ENCODE measurements at regions of chr10 and their contacts with region 1.

Region 1: DNA sequence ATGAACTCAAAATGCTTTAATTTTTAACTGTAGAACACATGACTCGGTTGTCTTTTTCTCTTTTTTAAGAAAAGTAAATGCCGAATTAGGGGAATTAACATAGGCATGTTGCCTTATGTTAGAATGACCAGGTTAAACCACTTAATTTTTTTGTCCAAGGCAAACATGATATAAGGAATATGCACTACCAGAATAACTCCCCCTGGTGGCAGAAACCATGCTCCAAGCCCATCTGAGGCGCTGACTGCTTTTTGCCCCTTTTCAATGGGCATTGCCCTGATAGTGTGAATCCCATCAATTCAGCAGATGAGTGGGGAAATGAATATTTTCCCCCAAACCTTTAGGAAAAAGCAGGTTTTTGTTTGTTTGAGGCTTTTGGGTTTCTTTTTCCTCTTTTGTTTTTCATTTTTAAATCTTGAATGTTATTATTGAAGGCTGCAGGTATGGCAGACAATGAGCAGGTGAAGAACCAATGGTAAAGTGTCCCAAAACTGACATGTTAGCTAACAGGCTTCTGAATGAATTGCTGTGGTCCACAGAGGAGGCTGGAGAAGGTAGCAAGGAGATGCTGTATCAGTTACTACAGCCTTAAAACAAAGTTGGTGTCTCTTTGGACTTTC is 284.3 kb downstream of the SORCS3 start:
- DNase-seq: peak; percentile 24
- ATAC-seq: no peak

Region 2: GRCh38 chr10:104417637-104418296 is 507.6 kb before region 1 on chr10:
- intact Hi-C with region 1: loop called in 1 of 2 experiments (anchors 10 kb)
- DNase-seq: no peak
- ATAC-seq: no peak

Region 3: GRCh38 chr10:104642658-104643302 is 282.6 kb before region 1 on chr10:
- intact Hi-C with region 1: loop called in 1 of 2 experiments (anchors 10 kb)
- DNase-seq: peak; percentile 29
- ATAC-seq: peak in 1 of 2 donors; percentile 56

Region 4: DNA sequence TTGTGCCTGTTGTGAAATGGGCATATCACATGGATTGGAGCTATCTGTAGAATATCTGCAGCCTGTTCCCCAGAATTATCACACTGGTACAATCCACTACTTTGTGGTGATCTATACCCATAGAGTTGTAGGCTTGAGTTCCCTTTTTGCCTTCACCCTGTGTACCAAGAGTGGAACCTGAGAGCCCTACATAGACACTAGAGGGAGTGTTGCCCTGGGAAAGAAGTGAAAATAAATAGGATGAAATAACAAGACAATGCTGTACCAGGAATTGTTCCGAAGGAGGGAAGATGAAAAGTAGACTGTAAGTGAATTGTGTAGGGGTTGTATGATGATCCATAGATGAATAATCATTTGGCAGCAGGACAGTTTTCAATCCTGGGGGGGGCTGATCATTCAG is 275.3 kb before region 1 on chr10:
- intact Hi-C with region 1: loop called (anchors 2 to 10 kb)
- DNase-seq: no peak
- ATAC-seq: peak in 1 of 2 donors; percentile 53

Region 5: DNA sequence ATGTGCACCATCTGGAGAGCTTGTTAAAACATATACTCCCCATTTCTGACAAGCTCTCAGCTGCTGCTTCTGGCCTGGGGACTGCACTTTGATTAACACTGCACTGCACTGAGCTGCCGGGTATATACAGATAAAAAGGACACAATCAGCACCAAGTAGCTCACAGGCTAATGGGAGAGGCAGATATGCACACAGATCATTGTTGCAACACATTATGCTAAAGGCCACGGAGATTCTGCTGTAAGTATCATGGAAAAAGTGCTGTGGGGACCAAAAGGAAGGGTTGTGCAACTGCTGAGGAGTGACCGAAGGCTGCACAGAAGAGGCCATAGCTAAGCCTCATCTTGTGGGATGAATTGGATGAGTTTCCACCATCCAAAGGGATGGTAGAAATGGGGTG is 171.0 kb after region 1 on chr10:
- intact Hi-C with region 1: no loop called
- DNase-seq: no peak
- ATAC-seq: no peak

Region 6: GRCh38 chr10:106038246-106038645 is 1112.9 kb after region 1 on chr10:
- intact Hi-C with region 1: no loop called
- DNase-seq: no peak
- ATAC-seq: no peak